ENCODE measurements at regions of chr1 and their contacts with region 1.

Region 1: DNA sequence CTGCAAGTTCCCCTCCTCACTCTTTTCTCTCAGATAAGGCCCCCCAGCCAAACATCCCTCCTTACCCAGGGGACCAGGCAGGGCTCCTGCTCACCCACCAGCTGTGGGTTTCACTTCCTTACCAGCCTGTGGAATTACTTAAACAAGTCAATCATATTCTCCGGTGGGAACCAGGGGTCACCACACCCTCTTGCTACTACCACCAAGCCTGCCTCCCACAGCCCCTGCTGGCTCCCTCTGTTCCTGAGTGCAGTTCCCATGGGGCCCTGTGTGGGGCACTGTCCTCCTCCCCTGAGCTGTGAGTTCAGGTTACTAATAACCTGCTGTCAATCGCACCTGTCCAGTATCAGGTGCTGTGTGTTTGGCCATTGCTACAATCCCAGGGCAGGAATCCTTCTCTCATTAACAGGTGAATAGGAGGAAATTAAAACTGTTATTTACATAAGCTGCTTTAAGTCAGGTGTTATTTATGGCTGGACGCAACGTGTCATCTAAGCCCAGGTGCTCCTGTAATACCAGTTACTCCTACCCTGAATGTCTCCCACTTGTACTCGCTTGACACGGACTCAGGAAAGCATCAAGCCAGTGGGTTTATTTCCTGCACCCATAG is 53.1 kb upstream of the LBR start:
- DNase-seq: no peak
- H3K4me3 ChIP-seq: no peak overlapping the region
- H3K27me3 ChIP-seq: no peaks in the 10 kb centered on the region
- CTCF ChIP-seq: peak; percentile 80

Region 2: DNA sequence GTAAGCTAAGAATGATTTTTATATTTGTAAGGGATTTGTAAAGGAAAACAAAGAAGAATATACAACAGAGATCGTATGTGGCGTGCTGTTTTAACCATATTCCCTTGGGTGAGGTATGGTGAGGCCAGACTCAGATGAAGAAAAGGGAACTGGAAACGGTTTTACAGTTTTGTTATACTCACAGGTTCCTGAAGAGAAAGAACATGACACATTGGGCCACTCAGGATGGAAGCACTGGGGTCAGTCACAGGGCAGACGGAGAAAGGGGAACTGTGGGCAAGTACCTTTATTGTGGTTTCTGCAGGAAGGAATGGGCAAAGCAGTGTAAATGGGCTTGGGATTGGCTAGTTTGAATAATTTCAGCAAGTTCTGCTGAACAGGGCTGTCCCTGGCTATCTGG is 230.5 kb before region 1 on chr1:
- CTCF ChIA-PET with region 1: no interaction called
- POLR2A ChIA-PET with region 1: no interaction called
- DNase-seq: no peak
- H3K4me3 ChIP-seq: no peak overlapping the region
- H3K27me3 ChIP-seq: no peaks in the 10 kb centered on the region
- CTCF ChIP-seq: no peak

Region 3: GRCh38 chr1:225467193-225468020 is 13.5 kb before region 1 on chr1:
- CTCF ChIA-PET with region 1: interaction called, 10 read pairs
- POLR2A ChIA-PET with region 1: no interaction called
- DNase-seq: no peak
- H3K4me3 ChIP-seq: no peak overlapping the region
- H3K27me3 ChIP-seq: no peaks in the 10 kb centered on the region; the same call in 1 of the 2 replicates
- CTCF ChIP-seq: no peak

Region 4: GRCh38 chr1:225498549-225499136 is 17.7 kb after region 1 on chr1:
- CTCF ChIA-PET with region 1: interaction called, 10 read pairs
- POLR2A ChIA-PET with region 1: no interaction called
- DNase-seq: peak; percentile 9
- H3K4me3 ChIP-seq: no peak overlapping the region
- H3K27me3 ChIP-seq: no peaks in the 10 kb centered on the region
- CTCF ChIP-seq: no peak

Measured in BJ (cell line).